Activated naive CD4-positive, alpha-beta T cell treated with anti-CD3 and anti-CD28 coated beads for 36 hours (primary cell): ENCODE measurements at regions of chr1 and their contacts with region 1.

Region 1: GRCh38 chr1:181142096-181142958 is 53.8 kb downstream of the IER5 start:
- DNase-seq: peak; percentile 93
- H3K4me3 Mint-ChIP-seq: peak overlapping the region; percentile 10
- H3K27ac Mint-ChIP-seq: peak overlapping the region; percentile 55
- H3K4me1 Mint-ChIP-seq: peaks cover 40% of the 10 kb centered on the region
- H3K27me3 Mint-ChIP-seq: no peaks in the 10 kb centered on the region

Region 2: DNA sequence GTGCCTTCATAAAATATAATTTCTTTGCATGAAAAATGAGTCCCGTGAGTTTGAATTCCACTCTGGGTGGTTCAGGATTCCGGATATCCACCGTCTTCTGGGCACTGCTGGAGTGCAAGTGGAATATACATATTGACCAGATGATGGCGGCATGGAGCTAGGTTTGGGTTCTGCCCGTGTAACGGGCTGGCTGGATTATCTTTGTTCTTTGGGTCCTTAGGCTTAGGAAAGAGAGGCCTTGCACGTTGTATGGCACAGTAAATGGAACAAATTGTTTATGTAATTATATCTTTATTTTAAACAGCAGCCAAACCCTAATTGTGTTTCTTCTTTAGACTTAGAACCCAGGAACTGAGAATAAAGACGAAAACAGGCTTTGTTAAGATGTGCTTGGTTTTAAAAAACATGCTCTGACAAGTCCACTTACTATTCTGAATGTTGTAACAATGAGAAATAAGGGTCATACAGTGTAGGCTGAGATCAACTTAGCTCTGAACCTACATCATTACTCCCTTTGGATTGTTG is 626.4 kb before region 1 on chr1:
- CTCF ChIA-PET with region 1: interaction called, 11 read pairs
- intact Hi-C with region 1: loop called (anchors 2 kb)
- DNase-seq: peak; percentile 76
- H3K4me3 Mint-ChIP-seq: no peak overlapping the region
- H3K27ac Mint-ChIP-seq: no peak overlapping the region
- H3K4me1 Mint-ChIP-seq: peaks cover 3% of the 10 kb centered on the region
- H3K27me3 Mint-ChIP-seq: peaks cover 3% of the 10 kb centered on the region

Region 3: DNA sequence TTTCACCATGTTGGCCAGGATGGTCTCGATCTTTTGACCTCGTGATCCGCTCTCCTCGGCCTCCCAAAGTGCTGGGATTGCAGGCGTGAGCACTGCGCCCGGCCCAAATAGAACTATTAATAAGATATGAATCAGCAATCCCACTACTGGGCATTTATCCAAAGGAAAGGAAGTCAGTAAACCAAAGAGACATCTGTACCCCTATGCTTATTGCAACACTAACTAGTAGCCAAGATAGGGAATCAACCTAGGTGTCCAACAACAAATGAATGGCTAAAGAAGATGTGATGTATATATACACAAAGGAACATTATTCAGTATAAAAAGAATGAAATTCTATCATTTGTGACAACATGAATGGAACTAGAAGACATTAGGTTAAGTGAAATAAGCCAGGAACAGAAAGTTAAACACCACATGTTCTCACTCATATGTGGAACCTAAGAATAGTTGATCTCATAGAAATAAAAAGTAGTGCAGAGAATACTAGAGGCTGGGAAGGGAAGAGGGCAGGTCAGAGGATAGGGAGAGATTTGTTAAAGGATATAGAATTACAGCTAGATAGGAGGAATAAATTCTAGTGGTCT is 461.7 kb before region 1 on chr1:
- CTCF ChIA-PET with region 1: no interaction called
- intact Hi-C with region 1: no loop called
- DNase-seq: no peak
- H3K4me3 Mint-ChIP-seq: no peak overlapping the region
- H3K27ac Mint-ChIP-seq: no peak overlapping the region
- H3K4me1 Mint-ChIP-seq: no peaks in the 10 kb centered on the region
- H3K27me3 Mint-ChIP-seq: no peaks in the 10 kb centered on the region

Region 4: DNA sequence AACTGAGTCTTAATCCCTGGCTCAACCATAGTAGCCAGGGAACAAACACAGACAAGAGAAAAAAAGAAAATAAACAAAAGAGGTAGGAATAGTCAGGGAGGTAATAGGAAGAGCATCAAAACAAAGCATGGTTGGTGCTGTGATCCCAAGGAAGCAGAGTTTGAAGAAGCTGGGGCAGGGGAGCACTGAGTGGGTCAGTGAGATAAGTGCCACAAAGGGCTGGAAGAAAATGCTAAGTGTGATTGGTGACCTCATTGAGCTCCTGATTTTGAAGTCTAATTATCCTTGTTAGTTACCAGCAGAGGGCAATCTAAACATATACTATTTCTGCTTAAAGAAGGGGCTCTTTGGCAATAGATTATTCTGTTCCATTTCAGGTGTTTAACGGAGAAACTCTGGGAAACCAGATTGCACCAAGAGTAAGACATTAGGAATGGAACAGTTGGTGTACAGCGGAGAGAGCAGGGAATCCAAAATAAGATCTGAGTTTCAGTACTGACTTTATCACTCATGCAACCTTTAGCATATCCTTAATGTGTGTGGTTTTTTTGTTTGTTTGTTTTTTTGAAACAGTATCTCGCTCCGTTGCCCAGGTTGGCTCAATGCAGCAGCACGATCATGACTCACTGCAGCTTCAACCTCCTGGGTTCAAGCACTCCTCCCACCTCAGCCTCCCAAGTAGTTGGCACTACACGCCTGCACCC is 260.4 kb before region 1 on chr1:
- CTCF ChIA-PET with region 1: interaction called, 21 read pairs
- intact Hi-C with region 1: loop called (anchors 1 kb)
- DNase-seq: no peak
- H3K4me3 Mint-ChIP-seq: no peak overlapping the region
- H3K27ac Mint-ChIP-seq: no peak overlapping the region
- H3K4me1 Mint-ChIP-seq: peaks cover 2% of the 10 kb centered on the region
- H3K27me3 Mint-ChIP-seq: no peaks in the 10 kb centered on the region

Region 5: DNA sequence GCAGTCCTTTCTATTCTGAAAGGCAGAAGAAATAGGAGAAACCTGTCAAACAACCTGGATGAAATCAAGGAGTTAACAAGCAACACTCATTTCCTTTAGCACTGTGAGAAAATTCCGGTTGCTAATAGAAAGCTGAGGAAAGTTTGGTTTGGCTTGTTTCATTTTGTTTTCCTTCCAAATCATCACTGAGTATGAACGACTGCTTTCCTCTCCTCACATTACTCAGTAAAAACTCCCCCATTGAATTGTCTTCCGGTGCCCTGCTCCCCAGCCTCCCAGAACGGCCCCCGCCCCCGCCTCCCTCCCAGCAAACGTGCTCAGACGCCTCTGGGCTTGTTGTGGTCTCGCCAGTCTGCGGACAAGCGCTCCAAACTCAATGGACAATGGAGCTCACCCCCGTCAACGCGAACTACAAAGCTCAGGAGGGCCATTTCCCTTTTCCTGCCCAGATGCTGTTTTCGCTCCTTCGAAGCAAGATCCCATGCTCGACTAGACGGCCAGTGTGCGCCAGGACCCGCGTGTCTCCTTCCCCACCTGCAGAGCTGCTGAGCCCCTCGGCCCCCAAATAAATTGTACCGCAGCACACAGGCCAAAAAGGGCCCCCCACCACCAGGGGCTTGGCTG is 120.4 kb before region 1 on chr1:
- CTCF ChIA-PET with region 1: interaction called, 12 read pairs
- intact Hi-C with region 1: loop called (anchors 1 kb)
- DNase-seq: peak; percentile 78
- H3K4me3 Mint-ChIP-seq: peak overlapping the region; percentile 86
- H3K27ac Mint-ChIP-seq: peak overlapping the region; percentile 94
- H3K4me1 Mint-ChIP-seq: peaks cover 35% of the 10 kb centered on the region
- H3K27me3 Mint-ChIP-seq: no peaks in the 10 kb centered on the region

Region 6: GRCh38 chr1:181079382-181079781 is 62.9 kb before region 1 on chr1:
- CTCF ChIA-PET with region 1: interaction called, 129 read pairs
- intact Hi-C with region 1: loop called (anchors 1 kb)
- DNase-seq: no peak
- H3K4me3 Mint-ChIP-seq: no peak overlapping the region
- H3K27ac Mint-ChIP-seq: no peak overlapping the region
- H3K4me1 Mint-ChIP-seq: peaks cover 3% of the 10 kb centered on the region
- H3K27me3 Mint-ChIP-seq: peaks cover 5% of the 10 kb centered on the region

Region 7: DNA sequence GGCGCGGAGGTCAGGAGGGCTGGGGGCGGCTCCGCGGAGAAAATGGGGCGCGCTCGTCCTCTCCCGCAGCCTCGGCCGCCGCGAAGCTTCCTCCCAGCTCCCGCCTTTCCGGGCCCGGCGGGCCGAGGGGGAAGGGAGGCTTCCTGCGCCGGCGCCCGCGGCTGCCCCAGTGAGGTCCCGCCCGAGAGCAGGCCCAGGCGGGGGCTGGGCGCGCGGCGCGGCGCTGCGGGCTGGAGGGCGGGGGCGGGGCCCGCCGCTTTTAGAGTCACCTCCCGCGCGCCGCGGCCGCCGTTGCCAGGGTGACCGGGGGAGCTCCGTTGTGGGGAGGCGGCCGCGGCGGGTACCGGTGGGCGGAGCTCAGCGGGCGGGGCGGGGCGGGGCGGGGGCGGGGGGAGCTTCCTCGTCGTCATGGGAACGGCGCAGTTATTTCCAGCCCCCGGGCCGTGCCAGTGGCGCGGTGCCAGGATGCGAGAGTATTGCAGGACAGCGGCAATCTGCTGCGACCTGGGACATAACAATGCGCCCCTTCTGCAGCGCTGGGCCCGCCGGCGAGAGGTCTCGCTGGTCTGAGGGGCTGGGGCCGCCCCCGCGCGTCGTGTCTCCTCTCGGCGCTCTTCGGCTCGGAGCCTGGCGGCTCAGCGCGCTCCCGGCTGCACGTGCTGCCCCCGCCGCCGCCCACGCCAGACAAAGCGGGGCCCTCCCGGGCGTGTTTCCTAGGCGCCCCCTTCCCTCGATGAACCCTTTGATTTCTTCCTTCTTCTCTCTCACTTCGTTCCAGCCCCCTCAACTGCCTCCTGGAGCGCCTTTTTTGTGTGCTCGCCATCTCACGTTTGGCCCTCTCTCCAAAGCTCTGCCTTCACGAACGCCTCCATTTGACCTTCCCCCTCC is 36.9 kb before region 1 on chr1:
- CTCF ChIA-PET with region 1: interaction called, 63 read pairs
- intact Hi-C with region 1: loop called (anchors 1 kb)
- DNase-seq: peak; percentile 93
- H3K4me3 Mint-ChIP-seq: peak overlapping the region; percentile 80
- H3K27ac Mint-ChIP-seq: no peak overlapping the region
- H3K4me1 Mint-ChIP-seq: peaks cover 70% of the 10 kb centered on the region
- H3K27me3 Mint-ChIP-seq: peaks cover 11% of the 10 kb centered on the region

Region 8: GRCh38 chr1:181166377-181167196 is 24.3 kb after region 1 on chr1:
- CTCF ChIA-PET with region 1: interaction called, 140 read pairs
- intact Hi-C with region 1: loop called (anchors 1 kb)
- DNase-seq: peak; percentile 88
- H3K4me3 Mint-ChIP-seq: no peak overlapping the region
- H3K27ac Mint-ChIP-seq: no peak overlapping the region
- H3K4me1 Mint-ChIP-seq: peaks cover 5% of the 10 kb centered on the region
- H3K27me3 Mint-ChIP-seq: no peaks in the 10 kb centered on the region

Region 9: DNA sequence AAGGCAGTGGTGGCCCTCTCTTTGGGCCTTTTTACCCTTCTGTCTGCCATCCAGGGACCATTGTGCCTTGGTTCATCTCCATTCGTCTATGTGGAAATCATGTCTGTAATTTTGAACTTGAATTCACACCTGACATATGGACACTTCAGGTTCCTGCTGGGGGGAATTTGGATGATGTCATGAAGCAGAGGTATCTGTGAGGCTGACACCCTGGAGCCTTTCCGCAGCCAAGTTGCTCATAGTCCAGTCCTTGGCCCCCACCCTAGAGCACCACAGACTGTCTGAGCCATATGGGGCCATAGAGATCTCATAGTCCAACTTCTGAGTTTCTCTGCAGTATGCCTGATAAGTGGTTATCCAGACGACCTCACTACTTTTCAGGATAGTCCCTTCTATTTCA is 193.3 kb after region 1 on chr1:
- CTCF ChIA-PET with region 1: no interaction called
- intact Hi-C with region 1: no loop called
- DNase-seq: no peak
- H3K4me3 Mint-ChIP-seq: no peak overlapping the region
- H3K27ac Mint-ChIP-seq: no peak overlapping the region
- H3K4me1 Mint-ChIP-seq: no peaks in the 10 kb centered on the region
- H3K27me3 Mint-ChIP-seq: no peaks in the 10 kb centered on the region